ENCODE measurements at regions of chr2 and their contacts with region 1.

Region 1: DNA sequence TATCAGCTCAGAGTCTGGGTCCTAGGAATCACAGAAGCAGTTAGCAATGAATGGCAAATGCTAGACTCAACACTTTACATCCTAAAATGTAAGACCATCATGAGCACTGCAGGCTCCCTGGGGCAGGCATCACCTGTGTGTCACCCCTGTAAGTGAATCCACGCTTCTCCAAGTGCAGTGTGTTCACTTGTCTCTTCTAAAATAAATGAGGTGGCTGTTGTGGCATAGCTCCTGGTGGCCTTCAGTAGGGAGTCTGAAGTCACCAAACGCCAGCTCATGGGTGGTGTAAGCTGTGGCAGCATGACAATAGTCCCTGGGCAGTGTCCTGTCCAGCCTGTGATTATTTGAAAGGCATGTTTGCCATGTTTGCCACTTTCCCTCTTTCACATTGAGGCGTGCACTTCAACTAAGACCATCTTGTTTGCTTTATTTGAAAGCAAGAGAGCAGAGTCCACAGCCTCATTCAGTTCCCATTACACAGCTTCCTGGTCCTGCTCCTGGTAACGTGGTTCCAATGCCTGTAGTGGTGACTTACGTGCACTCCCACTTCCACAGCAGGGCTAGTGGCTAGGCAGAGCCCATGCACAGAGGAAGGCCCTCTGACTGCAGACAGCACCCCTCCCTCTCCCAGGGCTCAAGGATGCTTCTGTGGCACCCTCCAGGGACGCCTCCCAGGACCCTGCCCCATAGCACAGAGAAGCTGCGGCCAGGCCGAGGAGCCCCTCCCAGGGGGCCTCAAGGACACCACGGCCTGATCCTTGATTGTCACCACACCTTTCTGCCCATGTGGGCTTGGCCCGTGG is 24.3 kb downstream of the COA5 start:
- DNase-seq: peak; percentile 96
- ATAC-seq: peak; percentile 98
- H3K4me3 ChIP-seq: peak overlapping the region in 1 of 3 experiments; percentile 32; a peak in 2 of 6 replicates
- H3K27ac ChIP-seq: peak overlapping the region; percentile 83
- H3K4me1 ChIP-seq: peaks cover 19% of the 10 kb centered on the region
- H3K27me3 ChIP-seq: no peaks in the 10 kb centered on the region
- CTCF ChIP-seq: no peak; the same call in 1 of the 2 replicates
- EP300 ChIP-seq: 0 out of 4 replicates have a peak, but pooled peaks of 1 of the 2 experiments have one; percentile 57
- POLR2A ChIP-seq: peak; percentile 56 to 71
- RAD21 ChIP-seq: peak; percentile 40

Region 2: DNA sequence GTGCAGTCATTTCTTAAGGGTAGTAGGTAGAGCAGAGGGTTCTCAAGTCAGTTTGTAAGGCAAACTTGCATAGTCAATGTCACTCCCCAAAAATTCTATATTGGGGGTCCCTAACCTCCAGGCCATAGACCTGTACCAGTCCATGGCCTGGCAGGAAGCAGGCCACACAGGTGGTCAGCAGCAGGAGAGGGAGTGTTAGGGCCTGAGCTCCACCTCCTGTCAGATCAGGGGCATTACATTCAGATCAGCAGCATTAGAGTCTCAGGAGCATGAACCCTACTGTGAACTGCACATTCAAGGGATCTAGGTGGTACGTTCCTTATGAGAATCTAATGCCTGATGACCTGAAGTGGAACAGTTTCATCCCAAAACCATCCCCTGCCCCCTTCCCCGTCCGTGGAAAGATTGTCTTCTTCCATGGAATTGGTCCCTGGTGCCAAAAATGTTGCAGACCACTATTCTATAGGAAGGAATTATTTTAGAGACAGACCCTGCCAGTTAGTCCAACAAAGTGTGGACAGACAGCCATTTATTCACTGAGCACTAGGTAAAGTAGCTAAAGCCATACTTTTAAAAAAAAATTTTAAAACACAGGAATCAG is 17.6 kb after region 1 on chr2:
- CTCF ChIA-PET with region 1: no interaction called
- POLR2A ChIA-PET with region 1: interaction called, 5 read pairs
- in situ Hi-C with region 1: no loop called
- intact Hi-C with region 1: loop called (anchors 2 kb)
- DNase-seq: peak; percentile 69
- ATAC-seq: peak; percentile 99
- H3K4me3 ChIP-seq: no peak overlapping the region
- H3K27ac ChIP-seq: no peak overlapping the region
- H3K4me1 ChIP-seq: peaks cover 9% of the 10 kb centered on the region
- H3K27me3 ChIP-seq: no peaks in the 10 kb centered on the region
- CTCF ChIP-seq: peak; percentile 97
- EP300 ChIP-seq: no peak
- POLR2A ChIP-seq: 0 out of 4 replicates have a peak, but pooled peaks of 1 of the 2 experiments have one; percentile 12
- RAD21 ChIP-seq: peak; percentile 92

Measured in HepG2 (cell line).